Heart left ventricle (tissue), 16 donors: ENCODE measurements at regions of chr7 and their contacts with region 1.

Region 1: GRCh38 chr7:1758028-1758858 is 88.2 kb downstream of the ELFN1 start:
- DNase-seq: peak in 3 of 5 donors; percentile 53 to 75 (median 63)
- ATAC-seq: peak; percentile 44 to 86 (median 68)
- H3K4me3 ChIP-seq: no peak overlapping the region
- H3K27ac ChIP-seq: peak overlapping the region in 4 of 12 donors; percentile 35 to 79 (median 72)
- H3K4me1 ChIP-seq: peaks cover 0 to 12% (median 0%) of the 10 kb centered on the region in 12 donors
- H3K27me3 ChIP-seq: peaks cover 0 to 5% (median 0%) of the 10 kb centered on the region in 9 donors
- CTCF ChIP-seq: peak; percentile 23 to 59 (median 43)
- POLR2A ChIP-seq: no peak

Region 2: DNA sequence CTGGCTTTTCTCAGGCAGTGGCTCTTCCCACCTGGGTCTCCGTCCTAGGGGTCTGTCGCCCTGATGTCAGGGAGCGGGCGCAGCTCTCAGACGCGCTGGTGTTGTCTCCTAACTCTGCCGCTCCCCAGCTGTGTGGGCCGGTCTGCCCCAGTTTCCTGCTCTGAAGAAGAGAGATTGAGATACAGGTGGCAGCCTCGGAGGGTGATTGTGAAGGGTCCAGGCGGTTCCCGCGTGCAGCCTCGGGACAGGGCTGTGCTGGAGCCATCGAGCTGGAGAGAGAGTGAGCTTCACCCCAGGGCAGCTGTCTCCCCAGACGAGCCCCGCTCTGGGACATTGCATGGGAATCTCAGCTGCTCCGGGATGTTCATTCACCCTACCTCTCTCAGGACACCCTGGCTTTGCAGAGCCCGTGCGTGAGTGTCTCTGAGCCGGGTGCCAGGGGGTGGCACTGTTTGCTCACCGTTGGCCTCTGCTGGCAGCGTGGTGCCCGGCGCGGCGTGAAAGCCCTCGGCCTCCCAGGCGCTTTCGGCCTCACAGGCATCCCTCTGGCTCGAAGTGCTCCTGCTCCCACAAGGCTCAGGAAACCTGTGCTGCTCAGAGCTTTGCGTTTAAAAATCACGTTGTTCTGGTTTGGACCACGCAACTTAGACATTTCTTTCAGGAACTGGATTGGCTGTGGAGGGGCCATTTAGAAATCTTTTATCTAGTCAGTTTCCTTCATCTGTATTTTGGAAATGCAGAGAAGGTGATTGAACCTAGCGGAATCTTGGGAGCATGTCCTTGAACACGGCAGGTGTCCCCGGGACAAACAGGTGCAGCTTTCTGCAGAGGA is 564.4 kb before region 1 on chr7:
- intact Hi-C with region 1: no loop called
- DNase-seq: peak; percentile 41 to 80 (median 55)
- ATAC-seq: peak; percentile 71 to 94 (median 92)
- H3K4me3 ChIP-seq: no peak overlapping the region
- H3K27ac ChIP-seq: no peak overlapping the region
- H3K4me1 ChIP-seq: peaks cover 0 to 8% (median 0%) of the 10 kb centered on the region in 12 donors
- H3K27me3 ChIP-seq: peaks cover 0 to 23% (median 6%) of the 10 kb centered on the region in 9 donors
- CTCF ChIP-seq: peak in 11 of 12 donors; percentile 16 to 61 (median 48)
- POLR2A ChIP-seq: no peak

Region 3: DNA sequence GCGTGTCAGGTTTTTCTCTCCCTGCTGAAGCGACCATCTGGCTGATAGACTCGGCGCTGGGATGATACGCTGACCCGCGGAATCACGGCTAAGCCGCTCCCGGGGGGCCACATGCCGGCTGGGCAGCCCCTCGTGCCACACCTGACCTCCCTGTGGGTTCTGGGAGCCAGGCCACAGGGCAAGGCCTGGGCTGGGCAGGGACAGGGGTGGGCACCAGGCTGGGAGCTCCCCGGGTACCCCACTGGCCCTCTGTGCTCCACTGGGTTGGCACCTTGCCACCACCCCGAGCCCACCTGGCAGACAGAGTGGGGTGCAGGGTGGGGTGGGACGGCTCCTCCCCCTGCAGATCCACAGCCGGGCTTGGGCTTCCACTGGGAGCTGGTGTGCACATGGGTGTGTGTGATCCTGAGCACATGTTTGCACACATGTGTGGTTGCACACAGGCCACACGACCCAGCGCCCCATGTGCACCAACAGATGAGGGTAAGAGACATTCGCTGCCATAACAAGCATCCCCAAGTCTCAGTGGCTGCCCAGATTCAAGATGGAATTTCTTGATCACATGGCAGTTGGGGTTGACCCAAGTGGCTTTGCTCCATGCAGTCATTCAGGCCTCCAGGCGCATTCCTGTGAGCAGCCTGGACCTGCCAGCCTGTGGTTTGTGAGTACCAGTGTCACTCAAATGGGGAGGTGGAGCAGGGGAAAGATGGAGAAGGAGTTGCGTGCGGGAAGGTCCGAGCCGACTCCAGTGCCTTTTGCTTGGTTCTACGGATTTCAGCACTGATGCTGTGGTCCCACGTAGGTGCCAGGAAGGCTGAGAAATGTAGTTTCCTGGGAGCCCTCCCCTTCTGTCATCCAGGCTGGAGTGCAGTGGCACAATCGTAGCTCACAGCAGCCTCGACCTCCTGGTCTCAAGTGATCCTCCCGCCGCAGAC is 445.8 kb before region 1 on chr7:
- intact Hi-C with region 1: no loop called
- DNase-seq: peak in 2 of 5 donors; percentile 20 to 44
- ATAC-seq: peak in 1 of 4 donors; percentile 31
- H3K4me3 ChIP-seq: no peak overlapping the region
- H3K27ac ChIP-seq: no peak overlapping the region
- H3K4me1 ChIP-seq: no peaks in the 10 kb centered on the region
- H3K27me3 ChIP-seq: peaks cover 0 to 7% (median 0%) of the 10 kb centered on the region in 9 donors
- CTCF ChIP-seq: no peak
- POLR2A ChIP-seq: no peak

Region 4: DNA sequence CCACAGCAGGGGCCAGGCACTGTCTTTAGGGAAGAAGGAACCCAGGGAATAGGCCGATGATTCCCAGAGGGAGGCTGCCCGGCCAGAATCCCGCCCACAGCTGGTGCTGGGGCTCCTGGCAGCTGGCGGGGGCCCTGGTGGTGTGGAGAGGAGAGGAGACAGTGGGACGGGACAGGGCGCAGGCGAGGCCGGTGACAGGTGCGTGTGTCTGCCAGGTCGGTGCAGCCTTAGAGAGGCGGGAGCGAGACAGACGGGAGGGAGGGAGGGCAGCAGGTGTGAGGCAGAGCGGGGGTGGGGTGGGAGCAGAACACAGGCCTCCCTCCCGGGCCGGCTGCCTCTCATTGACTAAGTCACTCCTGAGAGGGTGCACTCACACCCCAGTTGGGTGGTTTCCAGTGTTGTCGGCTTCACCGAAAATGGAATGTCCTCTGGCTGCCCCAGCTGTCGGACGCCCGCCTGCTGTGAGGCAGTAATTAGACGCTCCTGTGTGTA is 33.0 kb before region 1 on chr7:
- intact Hi-C with region 1: loop called in 1 of 10 experiments (anchors 2 kb)
- DNase-seq: peak; percentile 84 to 94 (median 86)
- ATAC-seq: peak; percentile 86 to 96 (median 89)
- H3K4me3 ChIP-seq: peak overlapping the region in 1 of 12 donors; percentile 13
- H3K27ac ChIP-seq: peak overlapping the region in 10 of 12 donors; percentile 53 to 91 (median 76)
- H3K4me1 ChIP-seq: peaks cover 0 to 33% (median 6%) of the 10 kb centered on the region in 12 donors
- H3K27me3 ChIP-seq: no peaks in the 10 kb centered on the region
- CTCF ChIP-seq: no peak
- POLR2A ChIP-seq: no peak